ENCODE measurements at regions of chr4 and their contacts with region 1.

Region 1: GRCh38 chr4:99949034-99949998 is 759 bp downstream of the H2AZ1 start:
- DNase-seq: peak; percentile 66 to 95 (median 81)
- ATAC-seq: peak; percentile 23 to 33 (median 28)
- H3K4me3 ChIP-seq: peak overlapping the region; percentile 73 to 99
- H3K4me3 Mint-ChIP-seq: no peak overlapping the region
- H3K27ac ChIP-seq: peak overlapping the region; percentile 95
- H3K27ac Mint-ChIP-seq: no peak overlapping the region
- H3K4me1 ChIP-seq: peaks cover 28 to 32% of the 10 kb centered on the region in 2 experiments
- H3K4me1 Mint-ChIP-seq: peaks cover 20 to 37% (median 30%) of the 10 kb centered on the region in 3 donors
- H3K27me3 ChIP-seq: no peaks in the 10 kb centered on the region
- H3K27me3 Mint-ChIP-seq: no peaks in the 10 kb centered on the region

Region 2: GRCh38 chr4:99349338-99349737 is 600.0 kb before region 1 on chr4:
- CTCF ChIA-PET with region 1: no interaction called
- POLR2A ChIA-PET with region 1: no interaction called
- DNase-seq: no peak
- ATAC-seq: no peak
- H3K4me3 ChIP-seq: no peak overlapping the region
- H3K4me3 Mint-ChIP-seq: no peak overlapping the region
- H3K27ac ChIP-seq: no peak overlapping the region
- H3K27ac Mint-ChIP-seq: no peak overlapping the region
- H3K4me1 ChIP-seq: no peaks in the 10 kb centered on the region
- H3K4me1 Mint-ChIP-seq: peaks cover 0 to 6% (median 0%) of the 10 kb centered on the region in 3 donors
- H3K27me3 ChIP-seq: peaks cover 0 to 2% of the 10 kb centered on the region in 2 experiments
- H3K27me3 Mint-ChIP-seq: peaks cover 6 to 15% of the 10 kb centered on the region in 2 donors

Region 3: GRCh38 chr4:99633772-99634171 is 315.5 kb before region 1 on chr4:
- CTCF ChIA-PET with region 1: no interaction called
- POLR2A ChIA-PET with region 1: no interaction called
- DNase-seq: no peak
- ATAC-seq: no peak
- H3K4me3 ChIP-seq: no peak overlapping the region
- H3K4me3 Mint-ChIP-seq: no peak overlapping the region
- H3K27ac ChIP-seq: no peak overlapping the region
- H3K27ac Mint-ChIP-seq: no peak overlapping the region
- H3K4me1 ChIP-seq: no peaks in the 10 kb centered on the region
- H3K4me1 Mint-ChIP-seq: peaks cover 0 to 5% (median 3%) of the 10 kb centered on the region in 3 donors
- H3K27me3 ChIP-seq: peaks cover 0 to 4% of the 10 kb centered on the region in 2 experiments
- H3K27me3 Mint-ChIP-seq: peaks cover 0 to 15% of the 10 kb centered on the region in 2 donors

Region 4: GRCh38 chr4:99808260-99808857 is 141.0 kb before region 1 on chr4:
- CTCF ChIA-PET with region 1: interaction called, 3 to 30 read pairs
- POLR2A ChIA-PET with region 1: no interaction called
- DNase-seq: peak; percentile 45 to 80 (median 63)
- ATAC-seq: peak; percentile 94 to 99 (median 94)
- H3K4me3 ChIP-seq: no peak overlapping the region
- H3K4me3 Mint-ChIP-seq: no peak overlapping the region
- H3K27ac ChIP-seq: no peak overlapping the region
- H3K27ac Mint-ChIP-seq: no peak overlapping the region
- H3K4me1 ChIP-seq: no peaks in the 10 kb centered on the region
- H3K4me1 Mint-ChIP-seq: peaks cover 0 to 4% (median 0%) of the 10 kb centered on the region in 3 donors
- H3K27me3 ChIP-seq: peaks cover 0 to 6% of the 10 kb centered on the region in 2 experiments
- H3K27me3 Mint-ChIP-seq: peaks cover 0 to 2% of the 10 kb centered on the region in 2 donors

Region 5: GRCh38 chr4:99894161-99894997 is 54.9 kb before region 1 on chr4 and contains the start of gene LAMTOR3:
- CTCF ChIA-PET with region 1: interaction called, 5 to 33 read pairs
- POLR2A ChIA-PET with region 1: interaction called, 5 to 27 read pairs
- DNase-seq: peak; percentile 82 to 95 (median 88)
- ATAC-seq: peak; percentile 98 to 99 (median 99)
- H3K4me3 ChIP-seq: peak within 1 kb of the TSS; percentile 63 to 93
- H3K4me3 Mint-ChIP-seq: peak within 1 kb of the TSS; percentile 93 to 97 (median 97)
- H3K27ac ChIP-seq: peak within 1 kb of the TSS; percentile 75
- H3K27ac Mint-ChIP-seq: peak within 1 kb of the TSS; percentile 97
- H3K4me1 ChIP-seq: peaks cover 17 to 25% of the 10 kb centered on the region in 2 experiments
- H3K4me1 Mint-ChIP-seq: peaks cover 44 to 49% (median 47%) of the 10 kb centered on the region in 3 donors
- H3K27me3 ChIP-seq: no peaks in the 10 kb centered on the region
- H3K27me3 Mint-ChIP-seq: no peaks in the 10 kb centered on the region
- total RNA-seq, gene LAMTOR3: 17.5 to 25.0 (median 19.4) TPM

Region 6: GRCh38 chr4:99965674-99966350 is 16.5 kb after region 1 on chr4:
- CTCF ChIA-PET with region 1: interaction called in 1 of 2 experiments, 12 read pairs
- POLR2A ChIA-PET with region 1: interaction called, 3 read pairs
- DNase-seq: peak in 1 of 35 experiments; percentile 48
- ATAC-seq: peak; percentile 45 to 93 (median 75)
- H3K4me3 ChIP-seq: no peak overlapping the region
- H3K4me3 Mint-ChIP-seq: peak overlapping the region in 2 of 3 donors; percentile 9 to 36
- H3K27ac ChIP-seq: peak overlapping the region; percentile 5
- H3K27ac Mint-ChIP-seq: peak overlapping the region in 1 of 2 donors; percentile 17
- H3K4me1 ChIP-seq: peaks cover 2 to 12% of the 10 kb centered on the region in 2 experiments
- H3K4me1 Mint-ChIP-seq: peaks cover 21 to 23% (median 23%) of the 10 kb centered on the region in 3 donors
- H3K27me3 ChIP-seq: peaks cover 0 to 2% of the 10 kb centered on the region in 2 experiments
- H3K27me3 Mint-ChIP-seq: no peaks in the 10 kb centered on the region

Measured in T-cell (primary cell).